MCF 10A (cell line): ENCODE measurements at regions of chr10 and their contacts with region 1.

Region 1: DNA sequence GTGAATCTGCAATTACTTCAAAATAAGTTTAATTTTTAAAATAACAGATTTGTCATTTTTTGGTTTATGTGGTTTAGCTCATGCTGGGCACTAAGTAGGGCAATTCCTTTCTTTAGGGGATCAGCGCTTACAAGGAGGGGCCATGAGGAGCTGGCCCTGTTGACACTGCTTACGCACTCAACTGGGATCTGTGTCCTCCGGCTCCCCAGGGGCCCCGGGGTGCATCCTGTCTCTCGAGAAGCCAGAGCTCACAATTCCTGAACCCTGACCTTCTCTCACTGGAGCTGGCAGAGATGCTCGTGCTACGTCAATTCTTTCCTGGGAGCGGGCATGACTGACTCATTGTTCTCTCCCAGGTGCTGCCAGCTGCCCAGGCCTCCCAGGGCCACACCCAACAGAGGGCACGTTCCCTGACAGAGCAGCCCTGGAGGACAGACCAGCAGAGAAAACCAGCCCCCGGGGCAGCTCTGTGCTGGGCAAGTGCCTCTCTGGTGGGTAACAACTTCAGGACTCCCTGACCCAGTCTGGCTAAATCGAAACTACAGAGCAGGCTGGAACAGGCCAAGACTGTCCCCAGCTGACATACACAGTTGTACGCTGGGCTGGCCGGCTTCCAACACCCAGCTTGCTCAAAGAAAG is 36.8 kb downstream of the CTBP2 start:
- DNase-seq: peak; percentile 99
- H3K4me3 Mint-ChIP-seq: peak overlapping the region; percentile 65
- H3K27ac Mint-ChIP-seq: peak overlapping the region; percentile 93
- H3K4me1 Mint-ChIP-seq: peaks cover 76% of the 10 kb centered on the region
- H3K27me3 Mint-ChIP-seq: no peaks in the 10 kb centered on the region
- CTCF ChIP-seq: no peak

Region 2: GRCh38 chr10:125084191-125084613 is 39.4 kb before region 1 on chr10:
- CTCF ChIA-PET with region 1: interaction called, 5 read pairs
- POLR2A ChIA-PET with region 1: interaction called, 11 read pairs
- intact Hi-C with region 1: loop called (anchors 1 kb)
- DNase-seq: peak; percentile 95
- H3K4me3 Mint-ChIP-seq: no peak overlapping the region
- H3K27ac Mint-ChIP-seq: peak overlapping the region; percentile 87
- H3K4me1 Mint-ChIP-seq: peaks cover 55% of the 10 kb centered on the region
- H3K27me3 Mint-ChIP-seq: no peaks in the 10 kb centered on the region
- CTCF ChIP-seq: no peak

Region 3: DNA sequence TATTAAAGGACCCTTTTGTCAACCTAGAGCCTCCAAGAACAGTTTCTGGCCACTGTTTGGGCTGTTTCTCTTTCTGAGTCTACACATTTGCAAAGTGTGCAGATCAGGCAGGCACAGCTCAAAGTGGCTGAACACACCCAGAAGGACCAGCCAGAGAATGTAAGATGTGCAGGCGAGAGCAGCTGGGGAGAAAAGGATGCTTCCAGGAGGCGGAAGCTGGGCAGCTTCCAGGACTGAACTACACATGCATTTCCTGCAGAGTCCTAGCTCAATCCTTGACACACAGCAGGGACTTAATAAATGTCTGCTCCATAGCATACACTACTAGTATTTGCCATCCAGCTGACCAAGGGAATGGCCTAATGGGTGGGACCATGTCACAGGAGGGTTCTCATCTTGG is 34.1 kb before region 1 on chr10:
- CTCF ChIA-PET with region 1: interaction called, 5 read pairs
- POLR2A ChIA-PET with region 1: interaction called, 11 read pairs
- intact Hi-C with region 1: loop called (anchors 1 kb)
- DNase-seq: no peak
- H3K4me3 Mint-ChIP-seq: no peak overlapping the region
- H3K27ac Mint-ChIP-seq: peak overlapping the region; percentile 31
- H3K4me1 Mint-ChIP-seq: peaks cover 47% of the 10 kb centered on the region
- H3K27me3 Mint-ChIP-seq: no peaks in the 10 kb centered on the region
- CTCF ChIP-seq: no peak

Region 4: DNA sequence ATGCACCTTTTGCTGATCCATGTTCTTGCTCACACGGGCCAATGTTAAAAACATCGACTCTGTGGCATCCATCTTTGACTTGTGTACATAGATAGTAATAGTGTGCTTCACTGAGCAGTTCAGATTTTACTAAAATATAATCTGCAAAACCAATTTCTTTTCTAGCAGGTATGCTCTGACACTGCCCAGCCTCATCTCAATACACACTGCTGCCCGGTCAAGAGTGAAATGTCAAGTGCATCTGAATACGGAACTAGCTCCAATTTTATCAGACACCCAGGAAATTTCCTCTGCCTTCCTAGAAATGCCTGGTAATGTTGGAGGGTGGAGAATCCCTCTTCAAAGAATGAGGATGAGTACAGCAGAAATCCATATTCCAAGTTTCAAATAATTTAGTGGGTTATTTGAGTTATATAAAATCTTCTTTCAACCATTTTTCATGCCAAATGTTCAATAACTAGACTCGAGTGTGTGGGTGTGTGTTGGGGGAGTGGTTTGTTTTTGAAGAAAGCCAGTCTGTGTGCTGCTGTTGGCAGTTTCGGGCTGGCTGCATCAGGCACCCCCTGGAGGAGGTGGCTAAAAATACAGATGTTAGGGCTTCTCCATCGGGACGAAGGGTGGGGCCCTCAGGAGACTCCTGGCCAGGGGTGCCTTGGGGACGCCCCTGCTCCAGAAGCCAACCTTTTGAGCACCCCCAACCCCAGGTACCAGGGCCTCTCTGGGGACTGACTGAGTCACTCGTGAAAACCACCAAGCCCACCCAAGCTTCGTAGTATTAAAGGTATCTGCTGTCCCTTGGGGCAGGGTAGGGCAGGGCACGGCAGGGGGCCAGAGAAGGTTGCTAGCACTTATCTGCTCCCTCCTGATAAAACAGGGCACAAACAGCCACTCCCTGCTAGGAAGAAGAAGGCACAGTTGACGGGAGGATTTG is 21.4 kb after region 1 on chr10:
- CTCF ChIA-PET with region 1: interaction called, 8 read pairs
- POLR2A ChIA-PET with region 1: interaction called, 28 read pairs
- intact Hi-C with region 1: no loop called
- DNase-seq: peak; percentile 74
- H3K4me3 Mint-ChIP-seq: no peak overlapping the region
- H3K27ac Mint-ChIP-seq: peak overlapping the region; percentile 39
- H3K4me1 Mint-ChIP-seq: peaks cover 51% of the 10 kb centered on the region
- H3K27me3 Mint-ChIP-seq: no peaks in the 10 kb centered on the region
- CTCF ChIP-seq: peak; percentile 48

Region 5: DNA sequence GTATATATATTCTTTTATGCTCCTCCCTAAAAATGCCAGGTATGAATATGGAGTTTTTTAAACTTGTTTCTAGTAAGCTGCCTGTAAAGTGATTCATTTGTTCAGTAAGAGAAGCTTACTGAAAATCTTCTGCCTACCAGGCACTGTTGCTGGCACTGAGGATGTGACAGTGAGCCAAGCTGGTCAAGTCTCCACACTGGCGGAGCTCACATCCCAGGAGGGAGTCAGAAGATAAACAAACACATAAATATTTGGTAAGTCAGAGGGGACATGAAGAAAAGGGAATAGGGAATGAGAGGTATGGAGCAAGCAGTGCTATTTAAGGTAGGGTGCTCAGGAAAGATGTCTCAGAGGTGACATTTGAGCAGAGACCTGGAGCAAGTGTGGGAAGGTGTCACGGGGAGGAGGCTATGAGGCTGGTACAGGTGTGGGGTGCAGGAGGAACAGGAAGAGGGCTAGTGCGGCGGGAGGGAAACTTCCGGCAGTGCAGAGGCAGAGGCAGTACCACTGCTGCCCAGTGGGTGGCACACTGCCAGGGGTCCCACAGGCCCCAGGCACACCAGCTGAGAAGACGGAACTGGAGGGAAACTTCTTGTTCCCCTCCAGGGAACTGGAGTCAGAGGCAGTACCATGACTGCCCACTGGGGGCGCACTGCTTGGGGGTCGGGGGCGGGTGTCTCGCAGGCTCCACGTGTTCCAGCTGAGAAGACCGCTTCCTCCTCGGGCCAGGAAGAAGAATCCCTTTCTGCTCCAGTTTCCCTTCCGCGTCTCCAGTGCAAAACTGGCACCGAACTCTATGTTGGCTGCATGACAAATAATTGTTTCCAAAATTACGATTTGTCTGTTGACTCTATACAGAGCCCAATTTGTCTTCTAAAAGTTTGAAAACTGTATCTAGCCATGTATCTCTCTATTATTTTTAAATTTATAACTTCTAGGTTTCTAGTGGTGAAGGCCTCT is 398.4 kb after region 1 on chr10:
- CTCF ChIA-PET with region 1: no interaction called
- POLR2A ChIA-PET with region 1: no interaction called
- intact Hi-C with region 1: no loop called
- DNase-seq: peak; percentile 34
- H3K4me3 Mint-ChIP-seq: no peak overlapping the region
- H3K27ac Mint-ChIP-seq: no peak overlapping the region
- H3K4me1 Mint-ChIP-seq: no peaks in the 10 kb centered on the region
- H3K27me3 Mint-ChIP-seq: peaks cover 34% of the 10 kb centered on the region
- CTCF ChIP-seq: peak; percentile 80